PC-3 (cell line): ENCODE measurements at regions of chr1 and their contacts with region 1.

Region 1: GRCh38 chr1:51170342-51170741 is 65.7 kb upstream of the RNF11 start:
- DNase-seq: peak; percentile 93
- ATAC-seq: peak; percentile 91
- H3K4me3 ChIP-seq: no peak overlapping the region
- H3K27ac ChIP-seq: 0 out of 2 replicates have a peak overlapping the region, but pooled peaks have one; percentile 23
- H3K4me1 ChIP-seq: peaks cover 21% of the 10 kb centered on the region
- H3K27me3 ChIP-seq: no peaks in the 10 kb centered on the region
- CTCF ChIP-seq: no peak

Region 2: DNA sequence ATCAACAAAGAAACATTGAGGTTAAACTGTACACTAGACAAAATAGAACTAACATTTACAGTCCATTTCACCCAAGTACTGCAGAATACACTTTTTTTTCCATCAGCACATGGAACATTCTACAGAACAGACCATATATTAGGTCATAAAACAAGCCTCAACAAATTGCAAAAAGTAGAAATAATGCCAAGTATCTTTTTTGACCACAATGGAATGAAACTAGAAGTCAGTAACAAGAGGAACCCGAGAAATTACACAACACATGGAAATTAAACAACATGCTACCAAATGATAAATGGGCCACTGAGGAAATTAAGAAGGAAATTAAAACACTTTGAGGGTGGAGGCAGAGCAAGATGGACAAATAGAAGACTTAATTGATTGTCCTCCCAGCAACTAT is 76.8 kb before region 1 on chr1:
- CTCF ChIA-PET with region 1: no interaction called
- POLR2A ChIA-PET with region 1: no interaction called
- intact Hi-C with region 1: loop called (anchors 2 kb)
- DNase-seq: no peak
- ATAC-seq: no peak
- H3K4me3 ChIP-seq: no peak overlapping the region
- H3K27ac ChIP-seq: no peak overlapping the region
- H3K4me1 ChIP-seq: no peaks in the 10 kb centered on the region
- H3K27me3 ChIP-seq: no peaks in the 10 kb centered on the region
- CTCF ChIP-seq: no peak

Region 3: GRCh38 chr1:51214615-51215131 is 44.3 kb after region 1 on chr1:
- CTCF ChIA-PET with region 1: no interaction called
- POLR2A ChIA-PET with region 1: no interaction called
- intact Hi-C with region 1: no loop called
- DNase-seq: peak; percentile 88
- ATAC-seq: peak; percentile 60
- H3K4me3 ChIP-seq: peak overlapping the region; percentile 23; the same call in 1 of the 2 replicates
- H3K27ac ChIP-seq: peak overlapping the region; percentile 63
- H3K4me1 ChIP-seq: peaks cover 28% of the 10 kb centered on the region
- H3K27me3 ChIP-seq: no peaks in the 10 kb centered on the region
- CTCF ChIP-seq: no peak

Region 4: GRCh38 chr1:51973603-51974474 is 803.5 kb after region 1 on chr1:
- CTCF ChIA-PET with region 1: no interaction called
- POLR2A ChIA-PET with region 1: no interaction called
- intact Hi-C with region 1: no loop called
- DNase-seq: peak; percentile 49
- ATAC-seq: peak; percentile 9; the same call in 1 of the 2 replicates
- H3K4me3 ChIP-seq: no peak overlapping the region
- H3K27ac ChIP-seq: peak overlapping the region; percentile 20
- H3K4me1 ChIP-seq: peaks cover 50% of the 10 kb centered on the region
- H3K27me3 ChIP-seq: no peaks in the 10 kb centered on the region
- CTCF ChIP-seq: no peak